MCF 10A (cell line): ENCODE measurements at regions of chr14 and their contacts with region 1.

Region 1: DNA sequence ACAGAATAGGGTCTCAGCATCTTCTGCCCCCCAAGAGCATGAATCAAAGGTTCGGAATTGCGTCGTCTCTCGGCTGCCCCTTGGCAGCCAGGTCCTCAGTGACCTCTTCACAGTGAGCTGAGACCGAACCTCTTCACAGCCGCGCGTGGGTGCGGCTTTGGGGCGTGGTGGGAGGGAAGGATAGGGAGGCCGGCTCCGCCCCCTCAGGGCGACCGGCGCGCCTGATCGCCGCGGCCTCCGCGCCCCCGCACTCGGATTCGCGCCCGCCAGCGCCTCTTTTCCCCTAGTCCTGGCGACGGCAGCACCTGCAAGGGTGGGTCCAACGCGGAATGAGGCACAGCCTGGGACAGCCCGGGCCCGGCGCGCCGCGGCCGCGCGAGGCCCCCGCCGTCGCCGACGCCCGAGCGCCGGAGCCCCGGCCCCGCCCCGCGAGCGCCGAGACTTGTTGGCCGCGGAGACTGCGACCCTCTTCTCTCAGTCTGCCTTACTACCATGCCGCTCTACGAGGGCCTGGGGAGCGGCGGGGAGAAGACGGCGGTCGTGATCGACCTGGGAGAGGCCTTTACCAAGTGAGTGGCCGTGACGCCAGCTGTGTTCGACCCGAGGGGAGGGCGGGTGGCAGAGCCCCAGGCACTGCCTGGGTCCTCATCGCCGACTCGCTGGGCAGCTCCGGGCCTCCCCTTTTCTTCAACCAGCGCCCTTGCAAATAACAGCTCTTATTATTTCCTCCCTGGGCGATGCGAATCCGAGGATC is at the start of gene ACTR10:
- DNase-seq: peak; percentile 88
- H3K4me3 Mint-ChIP-seq: peak within 1 kb of the TSS; percentile 98
- H3K27ac Mint-ChIP-seq: peak within 1 kb of the TSS; percentile 85
- H3K4me1 Mint-ChIP-seq: peaks cover 16% of the 10 kb centered on the region
- H3K27me3 Mint-ChIP-seq: peaks cover 20% of the 10 kb centered on the region
- CTCF ChIP-seq: no peak
- total RNA-seq, gene ACTR10: 55.1 and 78.8 TPM in 2 replicates

Region 2: DNA sequence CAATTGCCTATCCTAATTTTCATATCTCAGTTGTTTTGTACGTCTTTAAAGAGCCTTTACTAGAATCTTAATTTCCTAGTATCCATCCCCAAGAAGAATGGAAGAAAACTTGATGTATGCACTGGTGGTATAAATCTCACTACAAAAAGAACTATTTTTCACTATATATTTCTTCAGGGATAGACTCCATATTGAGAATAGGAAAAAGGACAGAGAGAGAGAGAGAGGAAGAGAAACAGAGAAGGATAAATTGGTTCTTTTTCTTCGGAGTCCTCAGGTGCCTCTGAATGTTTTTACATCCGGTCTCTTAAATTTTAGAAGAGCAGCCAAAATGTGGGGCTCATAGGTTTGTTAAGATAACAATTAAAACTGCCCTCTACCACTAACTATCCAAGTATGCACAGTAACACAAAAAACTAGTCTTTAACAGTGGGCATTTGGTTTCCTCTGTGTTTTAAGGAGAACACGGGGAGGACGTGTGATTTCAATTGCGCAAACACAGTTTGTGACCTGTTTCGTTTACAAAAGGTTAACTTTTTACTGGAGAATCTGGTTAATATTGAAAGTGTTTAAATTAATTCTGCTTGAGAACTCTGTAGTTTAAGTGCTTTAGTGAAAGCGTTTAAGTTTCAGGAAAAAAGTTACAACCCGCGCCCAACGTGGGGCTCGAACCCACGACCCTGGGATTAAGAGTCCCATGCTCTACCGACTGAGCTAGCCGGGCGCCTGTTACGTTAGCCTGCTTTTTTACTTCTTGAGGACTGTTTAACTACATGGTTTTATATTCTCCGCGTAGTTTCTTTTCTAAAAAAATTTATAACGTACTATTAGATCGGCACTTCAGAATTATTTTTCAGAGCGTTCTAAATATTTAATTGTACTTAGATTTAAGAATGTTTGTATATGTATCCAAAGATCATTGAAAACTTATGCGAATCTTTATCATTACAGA is 39.6 kb after region 1 on chr14:
- CTCF ChIA-PET with region 1: no interaction called
- POLR2A ChIA-PET with region 1: interaction called, 19 read pairs
- intact Hi-C with region 1: no loop called
- DNase-seq: peak; percentile 66
- H3K4me3 Mint-ChIP-seq: no peak overlapping the region
- H3K27ac Mint-ChIP-seq: no peak overlapping the region
- H3K4me1 Mint-ChIP-seq: peaks cover 7% of the 10 kb centered on the region
- H3K27me3 Mint-ChIP-seq: no peaks in the 10 kb centered on the region
- CTCF ChIP-seq: no peak